CD8-positive, alpha-beta T cell (primary cell): ENCODE measurements at regions of chr16 and their contacts with region 1.

Region 1: GRCh38 chr16:17899141-17899540 is 428.4 kb upstream of the XYLT1 start:
- DNase-seq: no peak
- ATAC-seq: no peak
- H3K4me3 ChIP-seq: no peak overlapping the region
- H3K4me3 Mint-ChIP-seq: no peak overlapping the region
- H3K27ac ChIP-seq: no peak overlapping the region
- H3K27ac Mint-ChIP-seq: no peak overlapping the region
- H3K4me1 ChIP-seq: no peaks in the 10 kb centered on the region
- H3K4me1 Mint-ChIP-seq: no peaks in the 10 kb centered on the region
- H3K27me3 ChIP-seq: peaks cover 0 to 3% of the 10 kb centered on the region in 2 experiments
- H3K27me3 Mint-ChIP-seq: peaks cover 10% of the 10 kb centered on the region
- CTCF ChIP-seq: no peak

Region 2: GRCh38 chr16:17803625-17804024 is 95.5 kb before region 1 on chr16:
- CTCF ChIA-PET with region 1: no interaction called
- POLR2A ChIA-PET with region 1: no interaction called
- intact Hi-C with region 1: no loop called
- DNase-seq: no peak
- ATAC-seq: no peak
- H3K4me3 ChIP-seq: no peak overlapping the region
- H3K4me3 Mint-ChIP-seq: no peak overlapping the region
- H3K27ac ChIP-seq: no peak overlapping the region
- H3K27ac Mint-ChIP-seq: no peak overlapping the region
- H3K4me1 ChIP-seq: no peaks in the 10 kb centered on the region
- H3K4me1 Mint-ChIP-seq: no peaks in the 10 kb centered on the region
- H3K27me3 ChIP-seq: no peaks in the 10 kb centered on the region
- H3K27me3 Mint-ChIP-seq: peaks cover 28% of the 10 kb centered on the region
- CTCF ChIP-seq: no peak

Region 3: DNA sequence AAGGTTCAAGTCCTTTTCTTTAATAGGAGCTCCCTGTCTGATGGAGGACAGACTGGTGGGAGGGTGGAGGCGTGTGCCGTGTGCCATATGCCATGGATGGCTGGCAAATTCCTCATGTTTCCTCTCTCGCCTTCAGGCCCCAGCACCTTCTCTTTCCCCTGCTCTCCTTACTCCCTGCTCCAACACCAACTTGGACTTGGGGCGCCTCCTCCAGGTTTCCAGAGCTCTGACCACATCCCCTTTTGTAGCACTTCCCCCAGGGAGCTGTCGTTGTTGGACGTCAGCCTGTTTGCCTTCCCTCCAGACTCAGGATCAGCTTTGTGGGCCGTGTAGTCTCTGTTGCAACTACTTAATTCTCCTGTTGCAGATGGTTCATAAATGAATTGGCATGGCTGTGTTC is 1115.3 kb after region 1 on chr16:
- CTCF ChIA-PET with region 1: no interaction called
- POLR2A ChIA-PET with region 1: no interaction called
- intact Hi-C with region 1: loop called in 1 of 2 experiments (anchors 10 kb)
- DNase-seq: no peak
- ATAC-seq: no peak
- H3K4me3 ChIP-seq: no peak overlapping the region
- H3K4me3 Mint-ChIP-seq: no peak overlapping the region
- H3K27ac ChIP-seq: no peak overlapping the region
- H3K27ac Mint-ChIP-seq: no peak overlapping the region
- H3K4me1 ChIP-seq: no peaks in the 10 kb centered on the region
- H3K4me1 Mint-ChIP-seq: no peaks in the 10 kb centered on the region
- H3K27me3 ChIP-seq: no peaks in the 10 kb centered on the region
- H3K27me3 Mint-ChIP-seq: peaks cover 3% of the 10 kb centered on the region
- CTCF ChIP-seq: no peak